CD4-positive, alpha-beta T cell (primary cell): ENCODE measurements at regions of chr1 and their contacts with region 1.

Region 1: GRCh38 chr1:205631727-205632373 is at the start of gene ELK4:
- DNase-seq: peak; percentile 99 to 100 (median 100)
- ATAC-seq: peak; percentile 79
- H3K4me3 ChIP-seq: peak within 1 kb of the TSS; percentile 81
- H3K4me3 Mint-ChIP-seq: peak within 1 kb of the TSS; percentile 94
- H3K27ac ChIP-seq: peak within 1 kb of the TSS; percentile 91 to 93
- H3K27ac Mint-ChIP-seq: peak within 1 kb of the TSS; percentile 91
- H3K4me1 ChIP-seq: peaks cover 29% of the 10 kb centered on the region
- H3K4me1 Mint-ChIP-seq: peaks cover 50% of the 10 kb centered on the region
- H3K27me3 ChIP-seq: no peaks in the 10 kb centered on the region
- H3K27me3 Mint-ChIP-seq: no peaks in the 10 kb centered on the region
- CTCF ChIP-seq: peak; percentile 75
- total RNA-seq, gene ELK4: 145 to 154 TPM

Region 2: GRCh38 chr1:205121660-205122488 is 510.0 kb before region 1 on chr1 and contains the start of gene RBBP5:
- CTCF ChIA-PET with region 1: interaction called, 3 read pairs
- POLR2A ChIA-PET with region 1: interaction called, 6 read pairs
- intact Hi-C with region 1: loop called in 1 of 2 experiments (anchors 5 kb)
- DNase-seq: peak; percentile 93 to 99 (median 95)
- ATAC-seq: peak; percentile 91
- H3K4me3 ChIP-seq: peak within 1 kb of the TSS; percentile 79
- H3K4me3 Mint-ChIP-seq: peak within 1 kb of the TSS; percentile 94
- H3K27ac ChIP-seq: peak within 1 kb of the TSS; percentile 90 to 94
- H3K27ac Mint-ChIP-seq: peak within 1 kb of the TSS; percentile 98
- H3K4me1 ChIP-seq: peaks cover 32% of the 10 kb centered on the region
- H3K4me1 Mint-ChIP-seq: peaks cover 46% of the 10 kb centered on the region
- H3K27me3 ChIP-seq: no peaks in the 10 kb centered on the region
- H3K27me3 Mint-ChIP-seq: no peaks in the 10 kb centered on the region
- CTCF ChIP-seq: peak; percentile 57
- total RNA-seq, gene RBBP5: 14.8 to 15.6 TPM

Region 3: GRCh38 chr1:205258716-205259115 is 373.1 kb before region 1 on chr1:
- CTCF ChIA-PET with region 1: no interaction called
- POLR2A ChIA-PET with region 1: no interaction called
- intact Hi-C with region 1: no loop called
- DNase-seq: no peak
- ATAC-seq: no peak
- H3K4me3 ChIP-seq: no peak overlapping the region
- H3K4me3 Mint-ChIP-seq: no peak overlapping the region
- H3K27ac ChIP-seq: no peak overlapping the region
- H3K27ac Mint-ChIP-seq: no peak overlapping the region
- H3K4me1 ChIP-seq: peaks cover 14% of the 10 kb centered on the region
- H3K4me1 Mint-ChIP-seq: peaks cover 9% of the 10 kb centered on the region
- H3K27me3 ChIP-seq: peaks cover 0 to 2% of the 10 kb centered on the region in 2 experiments
- H3K27me3 Mint-ChIP-seq: no peaks in the 10 kb centered on the region
- CTCF ChIP-seq: no peak

Region 4: GRCh38 chr1:205284343-205285144 is 347.3 kb before region 1 on chr1:
- CTCF ChIA-PET with region 1: no interaction called
- POLR2A ChIA-PET with region 1: interaction called, 9 read pairs
- intact Hi-C with region 1: loop called (anchors 5 to 10 kb)
- DNase-seq: peak; percentile 73 to 97 (median 93)
- ATAC-seq: peak; percentile 66
- H3K4me3 ChIP-seq: peak overlapping the region; percentile 50
- H3K4me3 Mint-ChIP-seq: peak overlapping the region; percentile 82
- H3K27ac ChIP-seq: peak overlapping the region; percentile 72 to 90
- H3K27ac Mint-ChIP-seq: peak overlapping the region; percentile 97
- H3K4me1 ChIP-seq: peaks cover 92% of the 10 kb centered on the region
- H3K4me1 Mint-ChIP-seq: peaks cover 81% of the 10 kb centered on the region
- H3K27me3 ChIP-seq: no peaks in the 10 kb centered on the region
- H3K27me3 Mint-ChIP-seq: no peaks in the 10 kb centered on the region
- CTCF ChIP-seq: no peak

Region 5: DNA sequence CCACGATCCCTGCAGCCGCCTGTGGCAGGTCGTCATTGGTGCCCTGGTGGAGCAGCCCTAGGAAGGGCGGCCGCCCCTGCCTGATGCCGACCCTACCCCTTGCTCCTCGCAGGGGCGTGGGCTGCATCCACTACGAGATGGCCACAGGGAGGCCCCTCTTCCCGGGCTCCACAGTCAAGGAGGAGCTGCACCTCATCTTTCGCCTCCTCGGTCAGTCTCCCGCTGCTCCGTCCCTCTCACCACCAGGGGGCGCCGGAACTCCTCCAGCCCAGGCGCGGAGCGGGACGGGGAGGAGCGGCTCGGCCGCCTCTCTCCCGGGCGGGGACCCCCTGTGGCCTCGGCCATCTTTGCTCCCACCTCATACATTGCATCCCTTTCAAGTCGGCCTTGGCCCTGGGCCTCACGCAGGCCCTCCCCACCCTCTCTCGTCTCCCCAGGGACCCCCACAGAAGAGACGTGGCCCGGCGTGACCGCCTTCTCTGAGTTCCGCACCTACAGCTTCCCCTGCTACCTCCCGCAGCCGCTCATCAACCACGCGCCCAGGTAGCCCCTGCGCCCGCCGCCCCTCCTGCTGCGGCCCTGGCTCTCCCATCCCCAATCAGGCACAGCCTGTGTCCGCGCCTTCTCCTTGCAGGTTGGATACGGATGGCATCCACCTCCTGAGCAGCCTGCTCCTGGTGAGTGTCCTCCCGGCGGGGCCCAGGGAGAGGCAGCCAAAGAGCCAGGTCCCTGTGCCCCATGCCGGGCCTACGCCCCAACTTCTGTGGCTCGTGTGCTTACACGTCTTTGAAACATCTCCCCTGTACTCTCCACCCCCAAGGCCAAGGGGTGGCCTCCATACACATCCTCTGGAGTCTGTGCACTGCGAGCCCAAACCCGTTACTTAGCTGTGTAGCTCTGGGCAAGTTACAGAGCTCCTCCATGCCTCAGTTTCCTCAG is 102.7 kb before region 1 on chr1:
- CTCF ChIA-PET with region 1: interaction called, 18 read pairs
- POLR2A ChIA-PET with region 1: interaction called, 7 read pairs
- intact Hi-C with region 1: loop called (anchors 1 kb)
- DNase-seq: peak; percentile 62 to 89 (median 80)
- ATAC-seq: peak; percentile 85
- H3K4me3 ChIP-seq: peak overlapping the region; percentile 32
- H3K4me3 Mint-ChIP-seq: no peak overlapping the region
- H3K27ac ChIP-seq: no peak overlapping the region
- H3K27ac Mint-ChIP-seq: no peak overlapping the region
- H3K4me1 ChIP-seq: peaks cover 9% of the 10 kb centered on the region
- H3K4me1 Mint-ChIP-seq: no peaks in the 10 kb centered on the region
- H3K27me3 ChIP-seq: no peaks in the 10 kb centered on the region
- H3K27me3 Mint-ChIP-seq: no peaks in the 10 kb centered on the region
- CTCF ChIP-seq: peak; percentile 85

Region 6: DNA sequence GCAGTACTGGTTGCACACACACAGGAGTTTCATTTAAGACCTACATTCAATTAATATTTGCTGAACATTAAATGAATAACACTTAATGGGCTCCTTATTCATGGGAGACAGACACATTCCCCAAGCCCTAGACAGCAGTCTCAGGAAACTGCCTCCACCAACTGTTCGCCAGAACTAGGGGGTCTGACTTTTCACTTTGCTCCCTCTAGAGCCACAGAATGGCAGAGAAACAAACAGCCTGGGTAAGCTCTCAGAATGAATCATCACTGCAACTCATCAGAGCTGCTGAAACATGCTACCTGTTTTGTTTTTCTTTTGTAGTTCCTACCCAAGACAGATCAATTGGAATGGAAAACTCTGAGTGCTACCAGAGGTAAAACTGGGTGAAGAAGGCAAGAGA is 31.8 kb before region 1 on chr1:
- CTCF ChIA-PET with region 1: interaction called, 194 read pairs
- POLR2A ChIA-PET with region 1: interaction called, 360 read pairs
- intact Hi-C with region 1: no loop called
- DNase-seq: peak in 1 of 14 experiments; percentile 1
- ATAC-seq: no peak
- H3K4me3 ChIP-seq: no peak overlapping the region
- H3K4me3 Mint-ChIP-seq: no peak overlapping the region
- H3K27ac ChIP-seq: no peak overlapping the region
- H3K27ac Mint-ChIP-seq: peak overlapping the region; percentile 34
- H3K4me1 ChIP-seq: no peaks in the 10 kb centered on the region
- H3K4me1 Mint-ChIP-seq: peaks cover 28% of the 10 kb centered on the region
- H3K27me3 ChIP-seq: no peaks in the 10 kb centered on the region
- H3K27me3 Mint-ChIP-seq: no peaks in the 10 kb centered on the region
- CTCF ChIP-seq: no peak

Region 7: DNA sequence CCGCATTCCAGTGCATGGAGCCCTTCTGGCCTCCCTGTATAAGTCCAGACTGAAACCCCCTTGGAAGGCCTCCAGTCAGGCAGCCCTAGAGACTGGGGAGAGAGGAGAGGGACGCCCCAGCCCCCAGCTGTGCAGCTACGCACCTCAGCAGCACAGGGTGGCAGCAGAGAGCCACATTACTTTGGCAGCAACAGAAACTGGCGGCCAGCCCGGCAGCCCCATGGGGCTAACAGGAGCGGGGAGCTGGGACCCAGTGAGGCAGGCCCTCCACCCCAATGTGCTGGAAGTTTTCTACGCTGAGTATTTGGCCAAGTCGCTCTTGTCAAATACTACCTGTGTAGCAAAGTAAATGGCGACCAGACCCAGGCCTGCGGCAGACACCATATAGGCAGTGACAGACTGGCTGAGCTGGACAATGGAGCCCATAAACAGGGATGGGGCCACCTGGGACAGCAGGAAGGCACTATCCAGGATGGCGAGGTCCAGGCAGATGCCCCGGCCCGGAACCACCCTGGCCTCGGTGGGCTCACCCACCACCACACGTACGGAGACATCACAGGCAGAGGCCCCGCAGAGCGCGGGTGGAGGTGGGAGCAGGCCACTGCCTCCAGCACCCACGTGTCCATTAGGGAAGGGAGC is 27.2 kb after region 1 on chr1:
- CTCF ChIA-PET with region 1: interaction called, 26 read pairs
- POLR2A ChIA-PET with region 1: interaction called, 35 read pairs
- intact Hi-C with region 1: loop called in 1 of 2 experiments (anchors 1 kb)
- DNase-seq: peak; percentile 58 to 83 (median 70)
- ATAC-seq: peak; percentile 95
- H3K4me3 ChIP-seq: no peak overlapping the region
- H3K4me3 Mint-ChIP-seq: no peak overlapping the region
- H3K27ac ChIP-seq: no peak overlapping the region
- H3K27ac Mint-ChIP-seq: no peak overlapping the region
- H3K4me1 ChIP-seq: peaks cover 5% of the 10 kb centered on the region
- H3K4me1 Mint-ChIP-seq: no peaks in the 10 kb centered on the region
- H3K27me3 ChIP-seq: no peaks in the 10 kb centered on the region
- H3K27me3 Mint-ChIP-seq: peaks cover 4% of the 10 kb centered on the region
- CTCF ChIP-seq: peak; percentile 85

Region 8: GRCh38 chr1:205775015-205775716 is 143.3 kb after region 1 on chr1 and contains the start of gene RAB29:
- CTCF ChIA-PET with region 1: no interaction called
- POLR2A ChIA-PET with region 1: interaction called, 27 read pairs
- intact Hi-C with region 1: loop called in 1 of 2 experiments (anchors 10 kb)
- DNase-seq: peak; percentile 70 to 95 (median 80)
- ATAC-seq: peak; percentile 89
- H3K4me3 ChIP-seq: peak within 1 kb of the TSS; percentile 78
- H3K4me3 Mint-ChIP-seq: peak within 1 kb of the TSS; percentile 96
- H3K27ac ChIP-seq: peak within 1 kb of the TSS; percentile 87 to 90
- H3K27ac Mint-ChIP-seq: peak within 1 kb of the TSS; percentile 97
- H3K4me1 ChIP-seq: peaks cover 37% of the 10 kb centered on the region
- H3K4me1 Mint-ChIP-seq: peaks cover 61% of the 10 kb centered on the region
- H3K27me3 ChIP-seq: no peaks in the 10 kb centered on the region
- H3K27me3 Mint-ChIP-seq: no peaks in the 10 kb centered on the region
- CTCF ChIP-seq: no peak
- total RNA-seq, gene RAB29: 11.7 to 11.8 TPM